Heart left ventricle (tissue), 16 donors: ENCODE measurements at regions of chr3 and their contacts with region 1.

Region 1: GRCh38 chr3:13818919-13819318 is 61.0 kb downstream of the WNT7A start:
- DNase-seq: no peak
- ATAC-seq: no peak
- H3K4me3 ChIP-seq: no peak overlapping the region
- H3K27ac ChIP-seq: no peak overlapping the region
- H3K4me1 ChIP-seq: no peaks in the 10 kb centered on the region
- H3K27me3 ChIP-seq: peaks cover 0 to 9% (median 0%) of the 10 kb centered on the region in 9 donors
- CTCF ChIP-seq: no peak
- POLR2A ChIP-seq: no peak

Region 2: DNA sequence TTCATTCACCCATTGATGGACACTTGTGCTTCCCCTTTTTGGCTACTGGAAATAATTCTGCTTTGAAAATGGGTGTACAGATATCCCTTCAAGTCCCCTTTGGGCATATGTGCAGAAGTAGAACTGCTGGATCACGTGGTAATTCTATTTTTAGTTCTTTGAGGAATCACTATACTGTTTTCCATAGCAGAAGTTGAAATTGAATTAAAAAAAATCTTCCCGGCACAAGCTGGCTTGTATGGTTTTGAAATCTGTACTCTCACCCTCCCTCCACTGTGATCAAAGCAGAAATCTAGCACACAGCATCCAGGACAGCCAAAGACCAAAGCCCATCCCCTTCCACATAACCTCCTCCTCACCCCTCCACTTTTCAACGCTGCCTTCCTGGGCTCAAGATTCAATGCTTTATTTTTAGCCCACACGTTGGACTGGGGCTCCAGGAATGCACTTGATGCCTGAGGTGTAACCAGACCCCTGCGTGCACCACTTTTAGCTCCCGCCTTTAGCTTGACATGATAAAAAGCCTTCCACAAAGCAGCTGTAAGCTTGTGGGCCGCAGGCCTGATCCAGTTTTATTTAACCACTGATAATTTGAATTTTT is 1089.8 kb before region 1 on chr3:
- intact Hi-C with region 1: no loop called
- DNase-seq: peak in 4 of 5 donors; percentile 59 to 75 (median 66)
- ATAC-seq: peak; percentile 83 to 95 (median 92)
- H3K4me3 ChIP-seq: no peak overlapping the region
- H3K27ac ChIP-seq: peak overlapping the region; percentile 22 to 85 (median 70)
- H3K4me1 ChIP-seq: peaks cover 0 to 22% (median 4%) of the 10 kb centered on the region in 12 donors
- H3K27me3 ChIP-seq: no peaks in the 10 kb centered on the region
- CTCF ChIP-seq: no peak
- POLR2A ChIP-seq: no peak

Region 3: DNA sequence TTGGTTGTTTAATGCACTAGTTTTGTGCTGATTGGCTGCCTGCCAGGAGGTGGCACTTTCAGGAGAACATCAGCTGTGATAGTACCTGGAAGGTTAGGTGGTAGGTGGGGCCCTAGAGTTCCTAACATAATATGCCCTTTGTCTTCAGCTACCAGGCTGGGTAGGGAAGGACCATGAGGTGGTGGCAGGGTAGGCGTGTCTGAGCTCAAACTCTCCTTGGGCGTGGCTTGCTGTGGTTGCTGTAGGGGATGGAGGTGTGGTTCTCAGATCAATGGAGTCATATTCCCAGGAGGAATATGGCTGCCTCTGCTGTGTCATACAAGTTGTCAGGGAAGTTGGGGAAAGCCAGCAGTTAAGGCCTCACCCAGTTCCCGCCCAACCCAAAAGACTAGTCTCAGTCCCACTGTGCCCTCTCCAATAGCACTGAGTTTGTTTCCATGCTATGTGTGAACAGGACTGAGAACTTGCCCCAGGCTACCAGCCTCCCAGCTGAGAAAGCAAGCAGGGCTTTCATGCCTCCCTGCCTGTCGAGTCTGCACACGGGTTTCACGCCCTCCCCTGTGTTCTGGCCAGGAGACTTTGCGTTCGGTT is 198.1 kb after region 1 on chr3:
- intact Hi-C with region 1: loop called in 1 of 10 experiments (anchors 5 kb)
- DNase-seq: no peak
- ATAC-seq: no peak
- H3K4me3 ChIP-seq: no peak overlapping the region
- H3K27ac ChIP-seq: no peak overlapping the region
- H3K4me1 ChIP-seq: no peaks in the 10 kb centered on the region
- H3K27me3 ChIP-seq: no peaks in the 10 kb centered on the region
- CTCF ChIP-seq: no peak
- POLR2A ChIP-seq: no peak